ENCODE measurements at regions of chr4 and their contacts with region 1.

Region 1: GRCh38 chr4:98995183-98996055 is at the start of gene METAP1:
- DNase-seq: peak; percentile 95
- H3K4me3 Mint-ChIP-seq: peak within 1 kb of the TSS; percentile 84
- H3K27ac Mint-ChIP-seq: peak within 1 kb of the TSS; percentile 92
- H3K4me1 Mint-ChIP-seq: peaks cover 38% of the 10 kb centered on the region
- H3K27me3 Mint-ChIP-seq: no peaks in the 10 kb centered on the region
- total RNA-seq, gene METAP1: 65.6 to 70.1 TPM

Region 2: DNA sequence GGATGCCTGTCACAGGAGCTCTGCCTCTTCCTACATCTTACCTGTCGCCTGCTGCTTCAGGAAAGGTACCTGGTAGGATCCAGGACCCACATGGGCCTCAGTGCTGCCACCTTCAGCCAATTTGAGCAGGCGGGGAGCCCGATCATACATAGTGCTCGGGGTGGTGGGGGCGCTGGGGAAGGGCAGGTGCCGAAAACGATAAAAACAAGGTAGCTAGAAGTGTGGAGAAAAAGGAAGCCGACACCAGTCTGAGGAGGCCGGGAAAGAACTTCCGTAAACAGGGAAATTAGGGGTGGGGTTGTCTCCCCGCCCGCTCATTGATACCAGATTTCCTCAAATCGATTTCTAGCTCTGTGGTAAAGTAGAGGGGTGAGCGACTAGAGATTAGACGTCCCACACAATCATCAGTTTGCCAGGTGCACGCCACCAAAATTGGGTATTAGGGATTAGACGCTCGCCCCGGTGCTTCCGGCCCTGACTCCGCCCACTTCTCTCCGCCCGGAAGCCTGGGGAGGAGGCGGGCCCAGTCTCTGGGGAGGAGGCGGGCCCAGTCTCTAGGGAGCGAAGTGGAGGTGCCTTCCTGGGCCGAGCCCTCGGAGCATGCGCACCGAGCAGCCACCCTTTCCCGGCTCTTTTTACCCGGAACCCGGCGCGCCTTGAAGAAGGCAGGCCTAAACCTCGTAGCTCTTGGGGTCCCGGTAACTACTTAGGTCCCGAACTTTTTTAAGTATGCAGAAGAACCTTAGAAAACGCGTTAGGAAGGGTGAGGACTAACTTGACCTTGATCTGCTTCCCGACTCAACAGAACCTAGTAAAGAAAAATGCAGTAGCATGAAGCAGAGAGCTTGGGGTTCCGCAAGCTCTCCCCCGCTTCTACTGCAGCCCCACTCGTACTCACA is 852.2 kb before region 1 on chr4 and contains the start of gene STPG2:
- CTCF ChIA-PET with region 1: no interaction called
- intact Hi-C with region 1: loop called (anchors 1 kb)
- DNase-seq: peak; percentile 95
- H3K4me3 Mint-ChIP-seq: peak within 1 kb of the TSS; percentile 96
- H3K27ac Mint-ChIP-seq: peak within 1 kb of the TSS; percentile 99
- H3K4me1 Mint-ChIP-seq: peaks cover 19% of the 10 kb centered on the region
- H3K27me3 Mint-ChIP-seq: no peaks in the 10 kb centered on the region
- total RNA-seq, gene STPG2: not detected

Region 3: GRCh38 chr4:98210281-98210680 is 785.1 kb before region 1 on chr4:
- CTCF ChIA-PET with region 1: no interaction called
- intact Hi-C with region 1: no loop called
- DNase-seq: no peak
- H3K4me3 Mint-ChIP-seq: no peak overlapping the region
- H3K27ac Mint-ChIP-seq: no peak overlapping the region
- H3K4me1 Mint-ChIP-seq: no peaks in the 10 kb centered on the region
- H3K27me3 Mint-ChIP-seq: no peaks in the 10 kb centered on the region

Region 4: GRCh38 chr4:98446499-98447375 is 548.7 kb before region 1 on chr4:
- CTCF ChIA-PET with region 1: no interaction called
- intact Hi-C with region 1: loop called (anchors 5 kb)
- DNase-seq: peak; percentile 72
- H3K4me3 Mint-ChIP-seq: peak overlapping the region; percentile 48
- H3K27ac Mint-ChIP-seq: peak overlapping the region; percentile 76
- H3K4me1 Mint-ChIP-seq: peaks cover 31% of the 10 kb centered on the region
- H3K27me3 Mint-ChIP-seq: no peaks in the 10 kb centered on the region

Region 5: GRCh38 chr4:98928505-98929340 is 66.7 kb before region 1 on chr4 and contains the start of gene EIF4E:
- CTCF ChIA-PET with region 1: interaction called, 14 read pairs
- intact Hi-C with region 1: loop called (anchors 1 kb)
- DNase-seq: peak; percentile 98
- H3K4me3 Mint-ChIP-seq: peak within 1 kb of the TSS; percentile 87
- H3K27ac Mint-ChIP-seq: peak within 1 kb of the TSS; percentile 99
- H3K4me1 Mint-ChIP-seq: peaks cover 39% of the 10 kb centered on the region
- H3K27me3 Mint-ChIP-seq: no peaks in the 10 kb centered on the region
- total RNA-seq, gene EIF4E: 104 to 116 TPM

Region 6: DNA sequence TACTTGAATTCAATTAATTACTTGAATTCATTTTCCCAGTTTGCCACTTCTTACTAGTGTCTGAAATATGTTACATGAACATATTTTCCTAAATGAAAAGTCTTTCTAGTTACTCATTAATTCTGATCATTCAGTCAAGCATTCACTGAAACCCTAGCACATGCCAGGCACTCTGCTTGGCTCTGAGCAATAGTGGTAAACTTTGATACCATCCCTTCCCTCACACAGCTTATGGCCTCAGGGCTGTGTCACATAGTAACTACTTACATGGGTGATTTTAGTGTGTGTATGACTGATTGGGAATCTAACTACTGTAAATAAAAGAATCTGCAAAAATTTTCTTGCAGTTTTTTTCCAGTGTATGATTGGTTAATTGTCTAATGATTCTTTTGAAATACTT is 32.8 kb after region 1 on chr4:
- CTCF ChIA-PET with region 1: interaction called, 5 read pairs
- intact Hi-C with region 1: loop called (anchors 2 kb)
- DNase-seq: no peak
- H3K4me3 Mint-ChIP-seq: no peak overlapping the region
- H3K27ac Mint-ChIP-seq: no peak overlapping the region
- H3K4me1 Mint-ChIP-seq: peaks cover 61% of the 10 kb centered on the region
- H3K27me3 Mint-ChIP-seq: no peaks in the 10 kb centered on the region

Region 7: GRCh38 chr4:99038213-99038612 is 42.8 kb after region 1 on chr4:
- CTCF ChIA-PET with region 1: no interaction called
- intact Hi-C with region 1: no loop called
- DNase-seq: no peak
- H3K4me3 Mint-ChIP-seq: no peak overlapping the region
- H3K27ac Mint-ChIP-seq: no peak overlapping the region
- H3K4me1 Mint-ChIP-seq: peaks cover 11% of the 10 kb centered on the region
- H3K27me3 Mint-ChIP-seq: no peaks in the 10 kb centered on the region

Region 8: GRCh38 chr4:99088481-99089365 is 93.3 kb after region 1 on chr4 and contains the start of gene ADH5:
- CTCF ChIA-PET with region 1: interaction called, 6 read pairs
- intact Hi-C with region 1: loop called (anchors 1 kb)
- DNase-seq: peak; percentile 92
- H3K4me3 Mint-ChIP-seq: peak within 1 kb of the TSS; percentile 96
- H3K27ac Mint-ChIP-seq: peak within 1 kb of the TSS; percentile 95
- H3K4me1 Mint-ChIP-seq: peaks cover 32% of the 10 kb centered on the region
- H3K27me3 Mint-ChIP-seq: no peaks in the 10 kb centered on the region
- total RNA-seq, gene ADH5: 94.3 to 99.9 TPM

Region 9: GRCh38 chr4:99438405-99438780 is 443.0 kb after region 1 on chr4:
- CTCF ChIA-PET with region 1: no interaction called
- intact Hi-C with region 1: no loop called
- DNase-seq: no peak
- H3K4me3 Mint-ChIP-seq: no peak overlapping the region
- H3K27ac Mint-ChIP-seq: no peak overlapping the region
- H3K4me1 Mint-ChIP-seq: no peaks in the 10 kb centered on the region
- H3K27me3 Mint-ChIP-seq: no peaks in the 10 kb centered on the region

Region 10: GRCh38 chr4:99504804-99505569 is 509.6 kb after region 1 on chr4:
- CTCF ChIA-PET with region 1: no interaction called
- intact Hi-C with region 1: loop called (anchors 1 kb)
- DNase-seq: no peak
- H3K4me3 Mint-ChIP-seq: no peak overlapping the region
- H3K27ac Mint-ChIP-seq: no peak overlapping the region
- H3K4me1 Mint-ChIP-seq: peaks cover 49% of the 10 kb centered on the region
- H3K27me3 Mint-ChIP-seq: no peaks in the 10 kb centered on the region